Activated CD4-positive, alpha-beta memory T cell treated with anti-CD3 and anti-CD28 coated beads for 36 hours (primary cell): ENCODE measurements at regions of chr19 and their contacts with region 1.

Region 1: DNA sequence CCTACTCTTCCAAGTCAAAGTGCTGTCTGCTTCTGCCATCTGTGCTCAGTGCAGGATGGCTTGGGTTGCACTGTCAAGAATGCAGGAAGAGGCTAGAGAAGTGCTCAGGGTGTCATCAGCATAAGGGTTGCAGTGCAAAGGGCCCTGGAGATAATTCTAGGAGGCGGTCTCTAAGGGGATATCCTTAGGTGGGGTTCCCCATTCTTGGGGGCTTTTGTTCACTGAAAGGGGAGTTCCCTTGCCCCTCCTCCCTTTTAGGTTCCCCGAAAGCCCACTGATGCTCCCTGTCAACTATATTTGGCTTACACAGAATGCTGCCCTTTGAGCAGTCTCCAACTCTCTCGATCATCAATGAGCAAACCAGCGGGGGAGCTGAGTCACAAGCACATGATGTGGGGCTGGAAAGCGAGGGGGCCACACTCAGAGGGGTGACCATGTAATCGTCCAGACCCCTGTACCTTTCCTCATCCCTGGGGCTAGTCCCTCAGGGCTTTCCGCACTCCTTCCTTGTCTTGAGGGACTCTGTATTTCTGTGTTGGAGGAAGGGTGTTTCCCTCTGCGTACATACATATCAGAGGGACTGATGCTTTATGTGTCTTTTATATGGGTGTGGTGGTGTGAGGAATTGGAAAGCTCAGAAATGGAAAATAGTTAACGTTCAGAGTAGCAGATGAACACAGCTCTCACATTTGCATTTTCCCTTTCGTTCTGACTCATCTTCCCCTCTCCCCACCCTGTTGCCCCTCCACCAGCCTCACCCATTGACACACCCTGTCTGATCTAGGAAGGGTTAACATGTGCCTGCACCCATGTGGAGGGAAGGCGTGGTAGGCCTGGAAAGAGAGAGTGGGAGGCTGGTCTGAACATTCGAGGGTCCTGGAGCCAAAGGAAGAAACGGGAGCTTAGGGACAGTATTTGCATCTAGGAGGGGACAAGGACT is 6.7 kb downstream of the ZBTB32 start:
- DNase-seq: peak; percentile 87
- H3K4me3 Mint-ChIP-seq: peak overlapping the region; percentile 54
- H3K27ac Mint-ChIP-seq: peak overlapping the region; percentile 99
- H3K4me1 Mint-ChIP-seq: peaks cover 49% of the 10 kb centered on the region
- H3K27me3 Mint-ChIP-seq: no peaks in the 10 kb centered on the region

Region 2: GRCh38 chr19:35213663-35214632 is 497.1 kb before region 1 on chr19:
- CTCF ChIA-PET with region 1: no interaction called
- POLR2A ChIA-PET with region 1: no interaction called
- intact Hi-C with region 1: loop called (anchors 5 kb)
- DNase-seq: peak; percentile 89
- H3K4me3 Mint-ChIP-seq: peak overlapping the region; percentile 35
- H3K27ac Mint-ChIP-seq: peak overlapping the region; percentile 92
- H3K4me1 Mint-ChIP-seq: peaks cover 64% of the 10 kb centered on the region
- H3K27me3 Mint-ChIP-seq: no peaks in the 10 kb centered on the region

Region 3: GRCh38 chr19:35693830-35694599 is 17.0 kb before region 1 on chr19:
- CTCF ChIA-PET with region 1: interaction called, 197 read pairs
- POLR2A ChIA-PET with region 1: interaction called, 64 read pairs
- intact Hi-C with region 1: no loop called
- DNase-seq: peak; percentile 94
- H3K4me3 Mint-ChIP-seq: no peak overlapping the region
- H3K27ac Mint-ChIP-seq: peak overlapping the region; percentile 54
- H3K4me1 Mint-ChIP-seq: peaks cover 14% of the 10 kb centered on the region
- H3K27me3 Mint-ChIP-seq: no peaks in the 10 kb centered on the region

Region 4: GRCh38 chr19:35748106-35749020 is 37.3 kb after region 1 on chr19 and contains the start of gene LIN37:
- CTCF ChIA-PET with region 1: interaction called, 12 read pairs
- POLR2A ChIA-PET with region 1: interaction called, 45 read pairs
- intact Hi-C with region 1: loop called (anchors 2 kb)
- DNase-seq: peak; percentile 99
- H3K4me3 Mint-ChIP-seq: peak within 1 kb of the TSS; percentile 94
- H3K27ac Mint-ChIP-seq: peak within 1 kb of the TSS; percentile 88
- H3K4me1 Mint-ChIP-seq: peaks cover 42% of the 10 kb centered on the region
- H3K27me3 Mint-ChIP-seq: no peaks in the 10 kb centered on the region
- total RNA-seq, gene LIN37: 7.5 TPM

Region 5: GRCh38 chr19:35775298-35776110 is 64.5 kb after region 1 on chr19 and contains the start of gene ARHGAP33:
- CTCF ChIA-PET with region 1: no interaction called
- POLR2A ChIA-PET with region 1: no interaction called
- intact Hi-C with region 1: loop called (anchors 2 kb)
- DNase-seq: peak; percentile 100
- H3K4me3 Mint-ChIP-seq: peak within 1 kb of the TSS; percentile 71
- H3K27ac Mint-ChIP-seq: peak within 1 kb of the TSS; percentile 15
- H3K4me1 Mint-ChIP-seq: peaks cover 15% of the 10 kb centered on the region
- H3K27me3 Mint-ChIP-seq: no peaks in the 10 kb centered on the region
- total RNA-seq, gene ARHGAP33: 35.0 to 39.3 TPM

Region 6: DNA sequence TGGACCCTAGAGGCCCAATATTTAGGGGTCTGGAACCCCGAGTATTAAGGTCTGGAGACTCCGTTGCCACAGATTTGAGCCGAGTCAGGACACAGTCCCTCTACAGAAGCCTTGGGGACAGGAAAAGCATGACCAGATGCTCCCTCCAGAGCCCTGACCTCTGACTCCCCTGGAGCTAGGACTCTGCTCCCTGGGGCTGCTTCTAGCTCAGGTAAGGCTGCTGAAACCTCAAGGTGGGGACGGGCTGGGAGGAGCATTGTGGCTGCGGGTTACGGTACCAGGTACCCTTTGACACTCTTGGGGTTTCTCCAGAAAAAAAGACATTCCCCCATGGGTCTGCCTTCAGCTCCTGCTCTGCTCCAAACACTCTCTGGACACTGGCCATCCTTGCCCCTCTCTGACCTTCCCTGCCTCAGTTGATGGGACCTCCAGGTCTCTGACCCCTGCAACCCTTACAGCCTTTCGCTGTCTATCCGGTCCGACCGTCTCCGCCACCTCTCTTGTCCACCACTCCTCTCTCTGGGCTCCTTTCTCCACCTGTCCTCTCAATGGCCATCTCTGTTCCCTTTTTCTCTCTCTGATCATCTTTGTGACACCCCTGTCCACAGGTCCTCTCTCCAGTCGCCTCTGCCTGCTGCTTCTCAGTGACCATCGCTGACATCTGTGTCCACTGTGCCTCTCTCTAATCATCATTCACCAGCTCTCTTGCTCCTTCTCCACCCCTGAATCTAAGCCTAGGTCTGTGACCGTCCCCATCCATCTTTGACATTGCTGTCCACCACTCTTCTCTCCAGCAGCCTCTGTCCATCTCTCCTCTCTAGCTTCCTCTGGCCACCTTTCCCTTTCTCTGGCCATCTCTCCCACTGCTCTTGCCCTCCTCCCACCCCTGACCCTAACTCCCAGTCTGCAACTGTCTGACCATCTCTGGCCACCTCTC is 226.6 kb after region 1 on chr19:
- CTCF ChIA-PET with region 1: no interaction called
- POLR2A ChIA-PET with region 1: no interaction called
- intact Hi-C with region 1: no loop called
- DNase-seq: no peak
- H3K4me3 Mint-ChIP-seq: peak overlapping the region; percentile 56
- H3K27ac Mint-ChIP-seq: no peak overlapping the region
- H3K4me1 Mint-ChIP-seq: peaks cover 28% of the 10 kb centered on the region
- H3K27me3 Mint-ChIP-seq: no peaks in the 10 kb centered on the region